GM12878 (cell line): ENCODE measurements at regions of chr4 and their contacts with region 1.

Region 1: DNA sequence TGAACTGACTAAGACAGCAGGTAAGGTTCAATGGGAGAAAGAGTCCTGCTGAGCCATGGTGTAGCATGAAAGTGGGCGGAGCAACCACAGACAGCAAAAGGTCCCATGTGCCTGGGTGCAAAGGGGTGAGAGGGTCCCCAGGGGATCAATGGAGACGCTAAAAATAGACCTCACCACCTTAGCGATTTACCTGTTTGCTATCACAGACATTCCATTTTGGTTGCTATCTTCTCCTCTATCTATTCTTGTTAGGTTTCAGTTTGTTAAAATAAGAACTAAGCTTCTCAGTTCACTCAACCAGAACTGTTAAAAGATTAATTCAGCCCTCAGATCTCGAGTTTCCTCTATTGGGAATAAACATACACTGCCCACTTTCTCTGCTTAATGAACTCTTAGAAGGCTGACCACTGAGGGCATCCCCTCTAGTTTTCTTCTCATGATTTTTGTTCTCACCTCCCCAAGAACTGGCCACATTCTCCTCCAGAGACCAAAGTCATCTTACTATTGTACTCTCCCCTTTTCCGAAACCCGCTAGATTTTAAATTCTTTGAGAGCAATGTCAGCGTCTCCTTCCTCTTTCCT is 136.7 kb downstream of the PARM1 start:
- DNase-seq: peak; percentile 68
- ATAC-seq: peak; percentile 93
- H3K4me3 ChIP-seq: 0 out of 2 replicates have a peak overlapping the region, but pooled peaks have one; percentile 16
- H3K27ac ChIP-seq: no peak overlapping the region
- H3K4me1 ChIP-seq: no peaks in the 10 kb centered on the region; the same call in 1 of the 2 replicates
- H3K27me3 ChIP-seq: no peaks in the 10 kb centered on the region
- CTCF ChIP-seq: no peak
- EP300 ChIP-seq: no peak
- POLR2A ChIP-seq: no peak
- RAD21 ChIP-seq: no peak

Region 2: DNA sequence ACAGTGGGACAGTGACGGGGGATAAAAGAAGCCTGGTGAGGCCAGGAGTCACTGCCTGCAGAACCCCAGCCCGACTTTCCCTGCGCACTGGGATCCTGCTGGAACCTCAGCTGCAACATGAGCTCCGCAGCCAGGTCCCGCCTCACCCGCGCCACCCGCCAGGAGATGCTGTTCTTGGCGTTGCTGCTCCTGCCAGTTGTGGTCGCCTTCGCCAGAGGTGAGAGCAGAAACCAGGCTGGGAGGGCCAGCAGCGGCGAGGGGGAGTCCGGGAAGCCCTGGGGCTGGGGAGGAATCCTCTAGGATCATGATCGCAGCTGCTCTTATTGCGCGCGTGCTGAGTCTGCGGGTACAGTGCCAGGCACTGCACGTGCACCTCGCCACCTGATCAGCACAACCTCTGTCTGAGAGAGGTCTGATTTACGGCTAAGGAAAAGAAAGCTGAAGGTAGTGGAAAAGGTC is 1216.3 kb before region 1 on chr4 and contains the start of gene PF4V1:
- CTCF ChIA-PET with region 1: no interaction called
- POLR2A ChIA-PET with region 1: no interaction called
- RAD21 ChIA-PET with region 1: no interaction called
- SMC1A ChIA-PET with region 1: no interaction called
- in situ Hi-C with region 1: no loop called
- intact Hi-C with region 1: no loop called
- DNase-seq: no peak
- ATAC-seq: no peak
- H3K4me3 ChIP-seq: no peak within 1 kb of the TSS
- H3K27ac ChIP-seq: no peak within 1 kb of the TSS
- H3K4me1 ChIP-seq: no peaks in the 10 kb centered on the region
- H3K27me3 ChIP-seq: peaks cover 0 to 2% of the 10 kb centered on the region in 2 experiments; a peak in 1 of 4 replicates
- CTCF ChIP-seq: no peak
- EP300 ChIP-seq: no peak
- POLR2A ChIP-seq: no peak
- RAD21 ChIP-seq: no peak
- polyA plus RNA-seq, gene PF4V1: not detected

Region 3: DNA sequence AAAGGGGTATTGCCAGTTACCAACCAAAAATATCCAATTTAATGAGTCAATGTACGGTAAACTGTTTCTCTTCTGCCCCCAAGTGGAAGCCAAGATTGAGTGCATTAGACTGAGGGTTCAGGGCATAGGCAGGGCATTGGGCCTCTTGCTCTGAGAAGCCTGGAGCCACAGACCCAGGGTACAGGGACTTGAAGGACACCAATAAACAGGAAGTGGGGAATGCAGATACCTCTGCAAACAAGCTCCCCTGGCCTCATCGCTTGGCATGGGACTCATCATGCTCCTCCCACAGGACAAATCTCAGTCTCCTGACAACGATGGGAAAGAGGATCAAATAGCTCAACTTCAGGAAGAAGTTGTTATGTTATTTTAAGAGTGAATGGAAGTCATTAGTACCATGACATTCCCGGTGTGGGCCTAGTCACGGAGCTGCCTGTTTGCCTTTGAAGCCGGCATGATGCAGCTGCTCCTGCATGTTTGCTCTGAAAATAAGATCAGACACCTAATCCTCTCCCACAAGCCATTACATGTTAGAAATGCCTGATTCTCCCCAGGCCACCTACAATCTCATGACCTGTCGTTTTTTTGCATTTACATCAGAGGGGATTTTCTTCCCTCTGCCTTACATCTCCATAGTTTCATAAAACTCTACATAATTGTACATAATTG is 220.5 kb after region 1 on chr4:
- CTCF ChIA-PET with region 1: interaction called, 3 read pairs
- POLR2A ChIA-PET with region 1: no interaction called
- RAD21 ChIA-PET with region 1: no interaction called
- SMC1A ChIA-PET with region 1: no interaction called
- in situ Hi-C with region 1: no loop called
- intact Hi-C with region 1: loop called (anchors 5 kb)
- DNase-seq: peak; percentile 23
- ATAC-seq: peak; percentile 98
- H3K4me3 ChIP-seq: no peak overlapping the region
- H3K27ac ChIP-seq: no peak overlapping the region
- H3K4me1 ChIP-seq: no peaks in the 10 kb centered on the region
- H3K27me3 ChIP-seq: no peaks in the 10 kb centered on the region
- CTCF ChIP-seq: peak; percentile 59 to 72 (median 59)
- EP300 ChIP-seq: no peak
- POLR2A ChIP-seq: no peak
- RAD21 ChIP-seq: peak; percentile 90